Vagina (tissue), 2 donors: ENCODE measurements at regions of chr3 and their contacts with region 1.

Region 1: GRCh38 chr3:14548321-14548729 is 8.2 kb upstream of the GRIP2 start:
- DNase-seq: no peak
- H3K4me3 ChIP-seq: no peak overlapping the region
- H3K27ac ChIP-seq: no peak overlapping the region
- H3K4me1 ChIP-seq: peaks cover 9% of the 10 kb centered on the region
- H3K27me3 ChIP-seq: no peaks in the 10 kb centered on the region
- CTCF ChIP-seq: peak; percentile 52 to 76 (median 74)
- POLR2A ChIP-seq: no peak

Region 2: DNA sequence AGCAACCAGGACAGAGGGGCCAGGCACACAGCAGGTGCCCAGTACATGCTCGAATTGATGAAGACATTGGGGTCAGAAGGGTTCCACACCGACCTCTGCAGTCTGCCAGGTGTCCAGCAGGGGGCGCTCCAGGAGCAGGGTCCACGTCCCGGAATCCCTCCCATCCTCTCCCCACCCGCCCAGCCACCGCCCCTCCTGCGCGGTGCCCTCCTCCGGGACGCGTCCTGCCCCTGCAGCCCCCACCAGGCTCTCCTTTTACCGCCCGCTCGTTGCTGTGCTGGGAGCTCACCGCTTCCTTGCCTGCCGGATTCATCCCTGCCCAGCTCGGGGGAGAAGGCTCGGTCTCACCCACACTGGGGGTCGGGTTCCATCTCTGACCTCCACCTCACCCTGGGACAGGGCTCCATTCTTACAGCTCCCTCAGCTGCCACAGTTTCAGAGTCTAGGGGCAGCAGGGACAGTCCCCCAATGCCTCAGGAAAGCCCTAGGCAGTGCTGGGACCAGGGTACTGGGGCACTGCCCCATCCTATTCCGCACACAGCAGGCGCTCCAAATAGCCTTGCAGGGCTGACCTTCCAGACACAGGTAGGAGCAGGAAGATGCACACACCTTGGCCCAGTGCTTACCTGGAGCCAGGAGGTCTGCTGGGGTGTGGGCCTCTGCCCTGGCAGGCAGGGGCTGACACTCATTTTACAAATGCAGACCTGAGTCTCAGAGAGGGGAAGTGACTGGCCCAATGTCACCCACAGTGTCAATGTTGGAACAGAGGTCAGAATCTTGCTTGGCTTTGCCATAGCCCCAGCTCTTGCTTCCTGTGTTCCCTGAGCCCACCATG is 39.1 kb before region 1 on chr3:
- intact Hi-C with region 1: loop called (anchors 2 kb)
- DNase-seq: no peak
- H3K4me3 ChIP-seq: no peak overlapping the region
- H3K27ac ChIP-seq: no peak overlapping the region
- H3K4me1 ChIP-seq: peaks cover 8% of the 10 kb centered on the region
- H3K27me3 ChIP-seq: no peaks in the 10 kb centered on the region
- CTCF ChIP-seq: peak; percentile 68 to 99 (median 73)
- POLR2A ChIP-seq: no peak